Activated CD4-positive, alpha-beta memory T cell treated with anti-CD3 and anti-CD28 coated beads for 36 hours (primary cell): ENCODE measurements at regions of chr6 and their contacts with region 1.

Region 1: GRCh38 chr6:42928986-42929820 is at the start of gene CNPY3:
- DNase-seq: peak; percentile 98
- H3K4me3 Mint-ChIP-seq: peak within 1 kb of the TSS; percentile 96
- H3K27ac Mint-ChIP-seq: peak within 1 kb of the TSS; percentile 99
- H3K4me1 Mint-ChIP-seq: peaks cover 38% of the 10 kb centered on the region
- H3K27me3 Mint-ChIP-seq: no peaks in the 10 kb centered on the region
- total RNA-seq, gene CNPY3: 32.2 to 37.6 TPM

Region 2: DNA sequence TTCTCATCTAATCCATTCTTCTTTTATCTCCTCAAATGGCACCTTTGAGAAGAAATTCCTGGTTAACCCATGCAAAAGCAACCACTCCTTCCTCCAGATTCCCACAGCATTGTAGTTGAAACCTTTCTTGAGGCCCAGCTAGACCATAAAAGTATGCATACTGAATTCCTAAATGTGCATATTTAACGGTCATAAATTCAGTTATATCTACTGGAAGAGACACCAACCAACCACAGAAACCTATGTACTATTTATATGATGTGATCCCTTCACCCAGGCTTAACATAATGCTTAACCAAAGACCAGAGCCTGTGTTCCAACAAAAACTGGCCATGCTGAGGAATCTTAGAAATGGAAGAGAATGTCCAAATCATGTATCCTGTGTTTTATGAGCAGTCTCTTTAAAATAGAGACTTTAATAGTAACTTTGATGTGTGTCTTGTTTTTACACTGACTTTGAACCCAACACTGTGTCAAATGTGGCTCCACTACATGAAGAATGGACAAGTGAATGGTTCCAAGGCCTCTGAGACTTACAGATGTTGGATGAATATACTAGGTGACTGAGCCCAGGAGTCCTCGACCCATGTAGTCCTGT is 890.3 kb before region 1 on chr6:
- CTCF ChIA-PET with region 1: no interaction called
- POLR2A ChIA-PET with region 1: no interaction called
- intact Hi-C with region 1: no loop called
- DNase-seq: no peak
- H3K4me3 Mint-ChIP-seq: peak overlapping the region; percentile 78
- H3K27ac Mint-ChIP-seq: peak overlapping the region; percentile 96
- H3K4me1 Mint-ChIP-seq: peaks cover 67% of the 10 kb centered on the region
- H3K27me3 Mint-ChIP-seq: no peaks in the 10 kb centered on the region

Region 3: DNA sequence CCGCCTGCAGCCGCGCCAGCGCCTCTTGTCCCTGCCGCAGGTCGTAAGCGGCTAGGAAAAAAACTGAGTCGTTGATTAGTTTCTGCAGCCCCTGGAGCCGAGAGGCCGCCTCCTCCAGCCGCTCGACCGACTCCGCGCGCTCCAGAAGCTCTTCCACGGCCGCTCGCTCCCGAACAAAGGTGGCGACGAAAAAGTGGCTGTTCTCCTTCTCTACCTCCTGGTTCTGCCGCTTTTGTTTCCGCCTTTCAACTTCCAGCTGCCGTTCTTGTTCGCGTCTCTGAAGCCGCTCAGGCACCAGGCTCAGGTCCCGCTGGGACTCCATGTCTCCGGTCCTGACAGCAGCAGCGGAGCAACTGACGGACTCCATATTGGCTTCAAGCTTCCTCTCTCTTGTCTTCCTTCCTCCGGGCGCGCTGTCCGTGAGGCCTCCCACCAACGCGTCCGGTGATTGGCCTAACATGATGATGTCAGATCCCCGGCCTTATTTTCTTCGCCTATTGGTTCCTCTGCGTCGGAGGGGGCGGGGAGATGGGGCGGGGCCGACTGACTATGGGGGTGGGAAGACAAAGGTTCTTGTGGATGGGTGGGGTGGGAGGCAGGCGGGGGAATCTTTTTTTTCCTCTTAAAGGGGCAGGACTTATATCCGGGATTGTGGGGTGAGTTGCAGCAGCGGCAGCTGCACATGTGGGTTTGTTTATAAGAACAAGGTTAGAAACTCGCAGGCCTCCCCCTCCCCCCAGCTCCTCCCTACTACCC is 183.3 kb before region 1 on chr6 and contains the start of gene TBCC:
- CTCF ChIA-PET with region 1: no interaction called
- POLR2A ChIA-PET with region 1: interaction called, 6 read pairs
- intact Hi-C with region 1: loop called (anchors 1 kb)
- DNase-seq: peak; percentile 97
- H3K4me3 Mint-ChIP-seq: peak within 1 kb of the TSS; percentile 99
- H3K27ac Mint-ChIP-seq: peak within 1 kb of the TSS; percentile 96
- H3K4me1 Mint-ChIP-seq: peaks cover 24% of the 10 kb centered on the region
- H3K27me3 Mint-ChIP-seq: no peaks in the 10 kb centered on the region
- total RNA-seq, gene TBCC: 17.3 TPM

Region 4: GRCh38 chr6:42978839-42979522 is 49.8 kb after region 1 on chr6 and contains the start of gene PEX6:
- CTCF ChIA-PET with region 1: interaction called, 11 read pairs
- POLR2A ChIA-PET with region 1: interaction called, 30 read pairs
- intact Hi-C with region 1: loop called (anchors 1 kb)
- DNase-seq: peak; percentile 97
- H3K4me3 Mint-ChIP-seq: peak within 1 kb of the TSS; percentile 94
- H3K27ac Mint-ChIP-seq: peak within 1 kb of the TSS; percentile 98
- H3K4me1 Mint-ChIP-seq: peaks cover 56% of the 10 kb centered on the region
- H3K27me3 Mint-ChIP-seq: no peaks in the 10 kb centered on the region
- total RNA-seq, gene PEX6: 25.6 to 26.4 TPM

Region 5: DNA sequence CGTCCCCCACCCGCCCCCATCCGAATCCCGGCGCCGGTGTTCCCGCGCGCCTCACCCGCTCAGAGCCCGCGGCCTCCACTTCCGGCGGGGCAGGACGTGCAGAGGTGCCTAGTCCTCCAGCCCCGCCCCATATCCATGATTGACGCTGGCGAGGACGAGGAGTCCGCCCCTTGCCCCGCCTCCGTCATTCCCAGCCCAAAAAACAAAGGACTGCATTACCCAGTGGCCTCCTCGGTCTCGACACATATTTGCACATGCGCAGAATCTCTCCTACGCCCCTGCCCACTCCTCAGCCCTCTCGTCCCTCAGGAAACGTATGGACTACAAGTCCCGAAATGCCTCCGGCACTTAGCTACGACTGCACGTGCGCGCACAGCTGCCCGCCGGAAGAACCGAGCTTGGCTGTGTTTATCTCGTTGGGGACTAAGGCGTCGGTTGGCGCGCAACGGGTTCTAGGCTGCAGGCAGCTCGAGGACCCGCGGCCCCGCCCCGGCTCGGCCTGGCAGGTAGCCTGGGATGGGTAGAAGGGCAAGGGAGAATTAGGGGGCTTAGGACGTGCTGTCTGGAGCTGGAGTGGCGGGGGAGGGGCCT is 84.7 kb after region 1 on chr6 and contains the starts of genes KLHDC3 and MEA1:
- CTCF ChIA-PET with region 1: interaction called, 4 read pairs
- POLR2A ChIA-PET with region 1: interaction called, 15 read pairs
- intact Hi-C with region 1: loop called (anchors 1 kb)
- DNase-seq: peak; percentile 100
- H3K4me3 Mint-ChIP-seq: peak within 1 kb of the TSS; percentile 94
- H3K27ac Mint-ChIP-seq: peak within 1 kb of the TSS; percentile 87
- H3K4me1 Mint-ChIP-seq: peaks cover 55% of the 10 kb centered on the region
- H3K27me3 Mint-ChIP-seq: no peaks in the 10 kb centered on the region
- total RNA-seq, gene KLHDC3: 48.1 to 52.3 TPM
- total RNA-seq, gene MEA1: 90.2 to 94.4 TPM

Region 6: DNA sequence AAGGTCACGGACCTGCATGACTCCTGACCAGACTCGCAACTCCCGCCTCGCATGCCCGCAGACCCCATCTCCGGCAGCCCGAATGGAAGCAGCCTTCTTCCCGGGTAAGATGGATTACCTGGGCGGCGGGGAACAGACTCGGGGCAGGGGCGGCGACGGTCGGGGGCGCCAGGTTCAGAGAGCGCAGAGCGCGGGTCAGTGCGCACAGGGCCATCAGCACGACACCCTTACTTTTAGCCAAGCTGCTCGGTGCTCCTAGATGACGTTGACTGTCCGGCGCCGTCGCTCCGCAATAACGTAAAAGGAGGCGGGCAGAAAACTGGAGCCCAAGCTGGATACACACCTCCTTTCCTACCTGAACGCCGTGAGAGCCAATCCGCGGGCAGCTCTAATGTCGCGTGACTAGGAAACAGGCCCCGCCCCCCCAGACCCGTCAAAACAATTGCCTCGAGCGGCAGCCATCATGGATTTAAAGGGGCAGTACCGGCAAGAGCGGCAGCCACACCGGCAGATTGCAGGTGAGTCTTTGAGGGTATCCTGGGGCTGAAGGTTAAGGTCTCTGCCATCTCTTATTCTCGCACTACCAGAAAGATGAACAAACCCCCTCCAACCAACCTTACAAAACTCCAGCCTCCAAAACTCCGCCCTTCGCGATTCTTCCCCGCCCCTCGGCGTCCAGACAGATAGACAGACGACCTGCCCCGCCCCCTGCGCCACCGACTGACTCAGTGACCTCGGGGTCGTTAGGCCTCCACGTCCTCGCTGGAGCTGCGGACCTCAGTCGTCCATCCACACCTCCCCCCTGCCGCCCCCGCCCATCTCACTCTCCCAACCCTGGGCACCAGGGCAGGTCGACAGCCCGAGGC is 130.2 kb after region 1 on chr6 and contains the starts of genes KLC4 and MRPL2:
- CTCF ChIA-PET with region 1: interaction called, 4 read pairs
- POLR2A ChIA-PET with region 1: interaction called, 6 read pairs
- intact Hi-C with region 1: loop called (anchors 1 kb)
- DNase-seq: peak; percentile 100
- H3K4me3 Mint-ChIP-seq: peak within 1 kb of the TSS; percentile 89
- H3K27ac Mint-ChIP-seq: peak within 1 kb of the TSS; percentile 95
- H3K4me1 Mint-ChIP-seq: peaks cover 30% of the 10 kb centered on the region
- H3K27me3 Mint-ChIP-seq: no peaks in the 10 kb centered on the region
- total RNA-seq, gene KLC4: 11.0 to 11.9 TPM
- total RNA-seq, gene MRPL2: 91.0 to 95.4 TPM

Region 7: GRCh38 chr6:43369174-43370022 is 440.2 kb after region 1 on chr6 and contains the start of gene ZNF318:
- CTCF ChIA-PET with region 1: no interaction called
- POLR2A ChIA-PET with region 1: no interaction called
- intact Hi-C with region 1: loop called (anchors 2 kb)
- DNase-seq: peak; percentile 96
- H3K4me3 Mint-ChIP-seq: peak within 1 kb of the TSS; percentile 85
- H3K27ac Mint-ChIP-seq: peak within 1 kb of the TSS; percentile 91
- H3K4me1 Mint-ChIP-seq: peaks cover 30% of the 10 kb centered on the region
- H3K27me3 Mint-ChIP-seq: no peaks in the 10 kb centered on the region
- total RNA-seq, gene ZNF318: 12.1 to 12.7 TPM